Activated CD4-positive, alpha-beta memory T cell treated with anti-CD3 and anti-CD28 coated beads for 36 hours (primary cell): ENCODE measurements at regions of chr12 and their contacts with region 1.

Region 1: DNA sequence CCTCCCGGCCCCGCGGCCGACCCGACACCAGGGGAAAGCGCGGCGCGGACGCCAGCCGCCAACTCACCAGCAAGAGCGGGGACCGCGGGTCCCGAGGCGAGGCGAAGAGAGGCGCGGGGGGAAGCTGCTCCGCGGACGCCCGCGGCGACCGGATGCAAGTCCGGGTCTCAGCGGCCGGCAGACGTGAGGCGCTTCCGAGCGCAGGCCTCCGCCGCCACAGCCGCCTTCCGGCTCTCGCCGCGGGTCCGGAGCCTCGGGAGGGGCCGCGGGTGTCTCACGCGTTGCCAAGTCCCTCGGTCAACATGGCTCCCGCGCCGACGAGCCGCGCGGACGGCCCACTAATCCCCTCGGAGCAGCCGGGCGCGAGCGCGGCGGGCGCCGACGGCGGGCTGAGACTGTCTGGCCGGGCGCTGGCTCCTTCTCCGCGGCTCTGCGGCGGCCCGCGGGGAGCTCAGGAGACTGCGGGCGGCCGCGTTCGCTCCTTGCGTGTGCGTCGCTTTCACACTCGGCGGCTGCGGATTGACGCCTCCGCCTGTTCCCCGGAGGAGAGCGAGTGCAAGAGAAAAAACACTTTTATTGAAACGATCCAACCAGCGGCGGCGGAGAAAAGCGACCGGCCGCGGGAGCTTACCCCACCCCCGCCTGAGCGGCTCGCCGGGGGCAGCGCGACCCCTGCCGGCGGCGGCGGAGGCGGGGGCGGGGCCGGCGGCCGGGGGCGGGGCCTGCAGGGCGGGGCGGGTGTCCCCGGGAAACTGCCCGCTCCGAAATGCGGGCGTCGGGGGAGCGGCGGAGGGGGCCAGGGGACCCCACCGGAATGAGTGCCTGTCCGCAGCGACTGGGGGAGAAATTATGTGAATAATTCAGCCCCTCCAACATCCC is at the start of gene CDK17:
- DNase-seq: peak; percentile 92
- H3K4me3 Mint-ChIP-seq: peak within 1 kb of the TSS; percentile 86
- H3K27ac Mint-ChIP-seq: peak within 1 kb of the TSS; percentile 97
- H3K4me1 Mint-ChIP-seq: peaks cover 39% of the 10 kb centered on the region
- H3K27me3 Mint-ChIP-seq: no peaks in the 10 kb centered on the region
- total RNA-seq, gene CDK17: 34.5 to 35.7 TPM

Region 2: DNA sequence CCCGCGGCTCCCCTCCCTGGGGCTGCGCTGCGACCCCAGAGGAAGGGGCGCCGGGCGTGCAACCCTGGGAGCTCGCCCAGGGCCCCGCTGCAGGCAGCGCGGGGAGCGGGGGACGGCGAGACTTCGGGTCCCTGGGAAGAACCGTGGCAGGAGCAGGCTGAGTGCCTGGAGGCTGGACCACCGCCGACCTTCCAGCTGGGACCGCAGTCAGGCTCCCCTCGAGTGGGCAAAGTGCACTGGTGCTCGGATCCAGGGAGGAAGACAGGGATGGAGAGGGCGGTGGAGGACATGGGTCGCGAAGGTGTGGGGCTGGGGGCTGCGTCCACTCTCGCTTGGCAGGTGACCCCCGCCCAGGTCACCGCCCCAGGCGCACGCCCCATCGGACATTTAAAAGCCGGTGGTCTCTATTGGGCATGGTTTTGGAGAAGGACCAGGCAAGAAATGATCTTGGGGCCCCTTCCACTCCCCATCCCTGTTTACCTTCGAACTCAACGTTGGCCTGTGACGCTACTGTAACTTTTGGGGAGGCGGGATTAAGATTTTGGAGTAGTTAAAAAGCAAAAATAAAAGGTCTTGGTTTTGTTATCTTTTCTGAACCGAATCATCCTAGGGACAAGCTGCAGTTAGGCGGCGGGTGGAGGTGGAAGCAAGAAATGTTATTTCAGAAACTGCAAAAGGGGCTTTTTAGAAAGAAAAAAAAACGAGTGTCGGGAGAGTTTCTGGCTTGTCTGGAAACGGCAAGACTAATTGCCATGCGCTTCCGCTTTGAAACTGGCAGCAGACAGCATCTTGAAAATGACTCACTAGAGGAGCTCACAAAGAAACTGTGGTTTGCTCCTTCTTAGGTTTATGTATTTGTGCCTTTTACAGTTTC is 204.9 kb before region 1 on chr12:
- CTCF ChIA-PET with region 1: interaction called, 3 read pairs
- POLR2A ChIA-PET with region 1: no interaction called
- intact Hi-C with region 1: loop called (anchors 1 kb)
- DNase-seq: peak; percentile 87
- H3K4me3 Mint-ChIP-seq: peak overlapping the region; percentile 93
- H3K27ac Mint-ChIP-seq: peak overlapping the region; percentile 99
- H3K4me1 Mint-ChIP-seq: peaks cover 45% of the 10 kb centered on the region
- H3K27me3 Mint-ChIP-seq: no peaks in the 10 kb centered on the region

Region 3: DNA sequence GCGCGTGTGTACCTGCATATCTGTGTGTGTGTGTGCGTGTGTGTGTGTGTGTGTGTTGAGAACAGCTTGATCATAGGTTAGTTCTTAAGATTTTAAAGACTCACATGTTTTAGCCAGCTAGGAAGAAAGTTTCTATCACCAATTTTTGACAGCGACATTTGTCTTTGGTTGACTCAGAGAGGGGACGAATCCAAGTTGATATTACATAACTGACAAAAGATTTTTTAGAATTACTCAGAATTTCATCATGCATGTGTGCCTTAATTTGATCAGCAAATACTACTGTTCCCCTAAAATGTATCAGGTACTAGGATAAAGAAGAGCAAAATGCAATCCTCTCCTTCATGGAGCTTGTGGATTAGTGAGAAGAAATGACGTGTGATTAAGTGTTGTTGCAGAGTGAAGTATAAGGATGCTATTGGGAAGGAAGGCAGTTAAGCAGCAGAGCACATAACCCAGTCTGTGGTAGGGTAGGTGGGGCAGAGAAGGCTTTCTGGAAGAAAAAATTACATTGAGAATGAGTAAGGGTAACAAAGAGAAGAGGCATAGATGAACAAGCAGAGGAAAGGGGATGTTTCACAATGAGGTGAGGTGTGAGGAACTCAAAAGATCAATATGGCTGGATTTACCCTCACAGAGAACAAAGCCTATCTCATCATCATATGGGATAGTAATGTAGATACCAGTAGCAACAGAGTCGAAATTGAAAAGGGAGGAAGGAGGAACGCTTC is 128.5 kb before region 1 on chr12:
- CTCF ChIA-PET with region 1: interaction called, 17 read pairs
- POLR2A ChIA-PET with region 1: interaction called, 6 read pairs
- intact Hi-C with region 1: no loop called
- DNase-seq: no peak
- H3K4me3 Mint-ChIP-seq: no peak overlapping the region
- H3K27ac Mint-ChIP-seq: peak overlapping the region; percentile 52
- H3K4me1 Mint-ChIP-seq: peaks cover 43% of the 10 kb centered on the region
- H3K27me3 Mint-ChIP-seq: no peaks in the 10 kb centered on the region

Region 4: GRCh38 chr12:96383991-96384390 is 16.2 kb before region 1 on chr12:
- CTCF ChIA-PET with region 1: interaction called, 13 read pairs
- POLR2A ChIA-PET with region 1: interaction called, 18 read pairs
- intact Hi-C with region 1: loop called (anchors 1 kb)
- DNase-seq: no peak
- H3K4me3 Mint-ChIP-seq: no peak overlapping the region
- H3K27ac Mint-ChIP-seq: no peak overlapping the region
- H3K4me1 Mint-ChIP-seq: peaks cover 71% of the 10 kb centered on the region
- H3K27me3 Mint-ChIP-seq: no peaks in the 10 kb centered on the region

Region 5: DNA sequence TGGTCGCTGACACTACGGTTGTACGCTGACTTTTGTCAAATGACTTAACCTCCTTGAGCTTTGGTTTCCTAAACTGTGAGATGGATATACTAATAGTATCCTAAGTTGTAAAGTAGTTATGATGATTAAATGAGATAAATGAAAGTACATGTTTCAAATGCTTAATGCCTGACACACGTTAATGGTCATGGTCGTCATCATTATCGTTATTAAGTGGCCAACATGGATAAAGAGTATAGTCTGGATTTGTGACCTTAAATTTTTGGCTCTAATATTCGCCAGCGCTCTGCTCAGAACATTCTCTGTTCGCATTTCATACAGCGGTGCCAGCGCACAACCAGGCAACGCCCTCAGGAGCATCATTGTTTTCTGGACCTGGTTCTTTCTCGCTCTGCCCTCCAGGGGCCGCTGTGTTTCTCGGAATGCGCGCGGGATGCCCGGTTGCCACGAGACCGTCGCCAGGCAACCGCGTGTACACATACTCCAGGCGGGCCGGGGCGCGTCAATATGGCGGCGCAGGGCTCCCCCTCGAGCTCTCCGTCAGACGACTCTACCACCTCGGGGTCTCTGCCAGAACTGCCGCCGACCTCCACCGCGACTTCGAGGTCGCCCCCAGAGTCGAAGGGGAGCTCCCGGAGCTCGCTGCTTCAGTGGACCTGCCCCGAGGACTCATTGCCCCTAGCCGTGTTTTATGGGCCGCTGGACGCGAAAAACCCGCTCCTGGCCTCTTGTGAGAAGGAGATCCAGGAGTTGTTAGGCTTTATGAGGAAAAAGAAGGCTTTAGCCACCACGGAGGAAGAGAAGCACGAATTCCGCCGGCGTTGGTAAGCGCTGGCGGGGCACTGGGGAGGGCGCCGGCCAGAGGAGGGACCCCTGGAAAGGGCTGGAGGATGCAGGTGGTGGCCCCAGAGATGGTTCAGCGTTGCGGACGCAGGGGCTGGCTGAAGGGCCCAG is 89.2 kb after region 1 on chr12 and contains the start of gene CFAP54:
- CTCF ChIA-PET with region 1: interaction called, 26 read pairs
- POLR2A ChIA-PET with region 1: interaction called, 5 read pairs
- intact Hi-C with region 1: loop called (anchors 1 kb)
- DNase-seq: peak; percentile 96
- H3K4me3 Mint-ChIP-seq: peak within 1 kb of the TSS; percentile 83
- H3K27ac Mint-ChIP-seq: peak within 1 kb of the TSS; percentile 16
- H3K4me1 Mint-ChIP-seq: peaks cover 36% of the 10 kb centered on the region
- H3K27me3 Mint-ChIP-seq: no peaks in the 10 kb centered on the region
- total RNA-seq, gene CFAP54: 0.31 to 0.33 TPM

Region 6: GRCh38 chr12:96534339-96534738 is 134.2 kb after region 1 on chr12:
- CTCF ChIA-PET with region 1: no interaction called
- POLR2A ChIA-PET with region 1: no interaction called
- intact Hi-C with region 1: no loop called
- DNase-seq: no peak
- H3K4me3 Mint-ChIP-seq: no peak overlapping the region
- H3K27ac Mint-ChIP-seq: no peak overlapping the region
- H3K4me1 Mint-ChIP-seq: no peaks in the 10 kb centered on the region
- H3K27me3 Mint-ChIP-seq: no peaks in the 10 kb centered on the region